ENCODE measurements at regions of chr19 and their contacts with region 1.

Region 1: DNA sequence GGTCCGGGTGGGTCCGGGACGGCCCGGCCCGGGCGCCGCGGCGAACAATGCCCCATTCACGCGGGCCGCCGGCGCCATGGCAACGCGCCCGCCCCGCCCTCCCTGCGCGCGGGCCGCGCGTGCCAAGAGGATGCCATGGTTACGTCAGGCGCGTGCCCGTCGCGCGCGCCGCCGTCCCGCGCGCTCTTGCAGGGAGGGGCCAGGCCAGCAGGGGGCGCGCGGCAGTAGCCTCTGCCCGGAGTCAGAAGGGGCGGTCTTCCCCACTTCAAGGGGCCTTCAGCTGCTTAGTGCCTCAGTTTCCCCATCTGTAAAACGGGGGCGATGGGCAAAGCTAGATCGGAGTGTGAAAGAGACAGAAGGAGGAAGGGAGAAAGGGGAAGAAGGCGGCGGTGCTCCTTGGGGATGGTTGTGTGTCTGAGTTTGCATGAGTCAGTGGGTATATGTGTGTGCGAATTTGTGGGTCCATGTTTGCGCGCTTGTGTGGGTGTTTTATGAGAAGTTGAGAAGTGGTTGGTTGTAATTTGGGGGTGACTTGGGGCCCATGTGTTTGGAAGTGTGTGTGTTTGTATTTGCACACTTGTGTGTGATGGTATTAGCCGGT is 11.6 kb upstream of the NFIX start:
- DNase-seq: peak; percentile 81
- H3K27ac ChIP-seq: peak overlapping the region; percentile 30
- CTCF ChIP-seq: peak; percentile 96

Region 2: DNA sequence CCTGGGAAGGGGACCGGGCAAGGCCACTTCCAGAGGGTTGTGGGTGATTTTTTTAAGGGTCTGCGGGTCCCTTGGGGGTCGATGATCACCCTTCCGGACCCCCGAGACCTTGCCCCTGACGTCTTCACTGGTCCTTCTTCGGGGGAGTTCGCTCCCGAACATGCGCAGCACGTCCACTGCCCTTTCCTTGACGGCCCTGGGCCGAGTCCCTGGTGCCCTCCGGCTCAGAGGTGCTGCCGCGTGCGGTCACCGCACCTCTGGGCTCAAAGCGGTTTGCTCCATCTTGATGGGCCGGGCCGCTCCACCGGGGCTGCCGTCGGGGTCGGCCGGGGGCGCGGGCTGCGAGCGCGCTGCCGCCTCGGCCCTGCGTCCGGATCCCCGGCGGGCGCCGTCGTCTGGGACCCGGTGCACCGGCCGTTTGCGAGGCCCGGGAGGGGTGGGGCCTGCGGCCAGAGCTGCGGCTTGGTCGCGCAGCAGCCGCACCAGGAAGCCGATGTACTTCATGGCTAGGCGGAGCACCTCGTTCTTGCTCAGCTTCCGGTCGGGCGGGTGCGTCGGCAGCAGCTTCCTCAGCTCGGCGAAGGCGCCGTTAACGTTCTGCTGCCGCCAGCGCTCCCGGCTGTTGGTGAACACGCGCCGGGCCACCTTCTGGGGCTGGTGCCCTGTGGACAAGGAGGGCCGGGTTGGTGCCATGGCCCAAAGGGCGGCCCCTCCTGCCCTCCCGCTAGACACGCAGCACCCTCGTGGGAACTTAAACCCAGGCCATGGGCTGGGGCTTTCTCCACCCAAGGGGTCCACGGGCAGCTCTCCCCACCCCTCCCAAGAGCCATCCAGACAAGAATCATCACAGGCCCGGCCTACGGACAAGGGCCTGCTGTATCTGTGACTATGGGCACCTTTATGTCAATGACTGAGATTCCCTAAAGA is 115.7 kb after region 1 on chr19:
- CTCF ChIA-PET with region 1: interaction called, 37 read pairs
- POLR2A ChIA-PET with region 1: no interaction called
- DNase-seq: no peak
- H3K27ac ChIP-seq: peak overlapping the region; percentile 42
- CTCF ChIP-seq: no peak